ENCODE measurements at regions of chr22 and their contacts with region 1.

Region 1: GRCh38 chr22:36775964-36776669 is at the start of gene IFT27:
- DNase-seq: peak; percentile 99 to 100
- H3K4me3 ChIP-seq: peak within 1 kb of the TSS; percentile 53
- CTCF ChIP-seq: no peak
- POLR2A ChIP-seq: no peak
- total RNA-seq, gene IFT27: 4.3 to 9.3 (median 8.7) TPM

Region 2: DNA sequence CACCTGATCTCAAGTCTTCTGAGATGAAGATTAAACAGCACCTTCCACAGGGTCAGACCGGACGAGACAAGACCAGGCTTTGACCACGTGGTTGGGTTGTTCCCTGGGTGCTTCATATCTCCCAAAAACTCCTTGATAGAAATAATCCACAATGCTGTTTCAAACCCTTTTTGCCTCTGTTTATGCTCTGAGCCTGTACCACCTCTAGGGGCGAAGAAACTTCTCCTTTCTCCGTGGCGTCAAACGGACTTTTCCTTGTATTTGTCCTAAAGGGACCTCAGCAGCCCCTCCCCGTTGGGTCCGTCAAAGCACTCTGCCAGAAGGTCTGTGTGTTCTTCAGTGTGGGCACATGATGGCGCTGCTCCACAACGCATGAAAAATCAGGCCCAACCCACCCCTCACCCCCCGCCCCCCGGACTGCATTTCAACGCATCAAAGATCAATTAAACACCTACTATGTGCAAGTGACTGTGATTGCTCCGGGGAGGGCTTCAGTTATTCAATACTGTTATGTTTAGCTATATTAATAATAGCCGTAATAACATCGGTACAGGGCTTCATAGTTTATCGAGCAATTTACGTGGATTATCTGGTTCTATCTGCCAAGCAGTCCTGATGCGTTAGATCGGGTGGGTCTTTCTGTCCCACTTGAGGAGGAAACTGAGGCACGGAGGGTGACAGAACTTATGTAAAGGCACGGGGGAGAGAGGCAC is 229.9 kb before region 1 on chr22:
- intact Hi-C with region 1: loop called (anchors 10 kb)
- DNase-seq: no peak
- H3K4me3 ChIP-seq: no peak overlapping the region
- CTCF ChIP-seq: no peak
- POLR2A ChIP-seq: no peak

Region 3: GRCh38 chr22:36619797-36620399 is 156.2 kb before region 1 on chr22:
- intact Hi-C with region 1: no loop called
- DNase-seq: no peak
- H3K4me3 ChIP-seq: no peak overlapping the region
- CTCF ChIP-seq: no peak
- POLR2A ChIP-seq: no peak

Region 4: GRCh38 chr22:36725356-36726006 is 50.6 kb before region 1 on chr22:
- intact Hi-C with region 1: no loop called
- DNase-seq: peak in 1 of 2 donors; percentile 63
- H3K4me3 ChIP-seq: no peak overlapping the region
- CTCF ChIP-seq: no peak
- POLR2A ChIP-seq: no peak